A673 (cell line): ENCODE measurements at regions of chr15 and their contacts with region 1.

Region 1: GRCh38 chr15:77496710-77497103 is 76.0 kb downstream of the HMG20A start:
- DNase-seq: peak; percentile 95
- H3K4me3 ChIP-seq: peak overlapping the region; percentile 24
- H3K27ac ChIP-seq: peak overlapping the region; percentile 84
- H3K4me1 ChIP-seq: peaks cover 30% of the 10 kb centered on the region
- H3K27me3 ChIP-seq: no peaks in the 10 kb centered on the region
- CTCF ChIP-seq: peak; percentile 97

Region 2: DNA sequence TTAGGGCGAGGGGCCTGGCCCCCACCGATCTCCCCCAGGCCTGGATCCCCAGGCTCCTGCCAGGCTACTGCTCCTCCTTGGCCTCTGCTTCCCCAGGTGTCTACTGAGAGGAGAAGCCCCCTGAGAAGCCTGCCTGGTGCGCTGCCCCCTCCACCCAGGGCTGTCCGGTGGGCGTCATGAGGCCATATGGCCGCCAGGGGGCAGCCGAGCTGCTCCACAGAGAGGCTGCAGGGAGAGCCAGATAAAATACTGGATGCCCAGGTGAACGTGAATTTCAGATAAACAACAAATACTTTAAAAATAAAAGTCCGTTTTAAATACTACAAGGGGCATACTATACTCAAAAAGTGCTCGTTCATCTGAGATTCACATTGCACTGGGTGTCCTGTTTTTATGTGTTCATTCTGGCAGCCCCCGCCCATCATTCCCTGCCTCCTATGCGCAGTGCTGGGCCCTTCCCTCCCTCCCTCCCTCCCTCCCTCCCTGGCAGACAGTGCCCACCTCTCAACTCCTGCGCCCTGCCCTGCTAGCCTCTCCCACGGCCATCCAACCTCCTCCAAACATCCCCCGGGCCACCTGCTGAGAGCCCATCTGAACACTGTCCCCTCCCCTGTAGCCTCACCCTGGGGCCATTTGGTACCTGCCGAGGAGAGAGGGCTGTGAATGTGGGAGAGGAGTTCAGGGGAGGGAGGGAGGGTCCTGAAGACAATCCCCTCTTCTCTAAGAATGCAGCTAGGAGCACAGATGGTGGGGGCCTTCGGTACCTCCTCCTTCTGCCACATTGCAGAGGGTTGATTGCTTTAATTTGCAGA is 472.2 kb before region 1 on chr15:
- CTCF ChIA-PET with region 1: no interaction called
- POLR2A ChIA-PET with region 1: no interaction called
- intact Hi-C with region 1: loop called (anchors 5 kb)
- DNase-seq: peak; percentile 73
- H3K4me3 ChIP-seq: no peak overlapping the region
- H3K27ac ChIP-seq: no peak overlapping the region
- H3K4me1 ChIP-seq: no peaks in the 10 kb centered on the region
- H3K27me3 ChIP-seq: no peaks in the 10 kb centered on the region
- CTCF ChIP-seq: peak; percentile 97

Region 3: GRCh38 chr15:77118882-77119321 is 377.8 kb before region 1 on chr15:
- CTCF ChIA-PET with region 1: interaction called, 17 read pairs
- POLR2A ChIA-PET with region 1: no interaction called
- intact Hi-C with region 1: loop called (anchors 2 kb)
- DNase-seq: peak; percentile 82
- H3K4me3 ChIP-seq: no peak overlapping the region
- H3K27ac ChIP-seq: no peak overlapping the region
- H3K4me1 ChIP-seq: no peaks in the 10 kb centered on the region
- H3K27me3 ChIP-seq: no peaks in the 10 kb centered on the region
- CTCF ChIP-seq: peak; percentile 93

Region 4: GRCh38 chr15:77419836-77420609 is 76.7 kb before region 1 on chr15 and contains the start of gene PEAK1:
- CTCF ChIA-PET with region 1: no interaction called
- POLR2A ChIA-PET with region 1: no interaction called
- intact Hi-C with region 1: loop called (anchors 2 kb)
- DNase-seq: peak; percentile 100
- H3K4me3 ChIP-seq: peak within 1 kb of the TSS; percentile 73
- H3K27ac ChIP-seq: peak within 1 kb of the TSS; percentile 97
- H3K4me1 ChIP-seq: peaks cover 41% of the 10 kb centered on the region
- H3K27me3 ChIP-seq: no peaks in the 10 kb centered on the region
- CTCF ChIP-seq: no peak
- total RNA-seq, gene PEAK1: 36.7 and 39.8 TPM in 2 replicates